HCT116 (cell line): ENCODE measurements at regions of chr11 and their contacts with region 1.

Region 1: DNA sequence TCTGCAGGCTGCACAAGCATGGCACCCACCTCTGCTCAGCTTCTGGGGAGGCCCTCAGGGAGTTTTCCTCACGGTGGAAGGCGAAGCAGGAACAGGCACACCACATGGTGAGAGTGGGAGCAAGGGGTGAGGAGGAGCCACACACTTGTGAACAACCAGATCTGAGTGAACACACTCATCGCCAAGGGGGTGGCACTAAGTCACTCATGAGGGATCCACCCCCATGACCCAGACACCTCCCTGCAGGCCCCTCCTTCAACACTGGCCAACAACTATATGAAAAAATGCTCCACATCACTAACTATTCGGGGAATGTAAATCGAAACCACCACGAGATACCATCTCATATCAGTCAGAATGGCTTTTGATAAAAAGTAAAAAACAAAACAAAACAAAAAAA is 722 bp upstream of the KRTAP5-2 start:
- DNase-seq: no peak
- ATAC-seq: no peak
- H3K4me3 ChIP-seq: no peak overlapping the region
- H3K27ac ChIP-seq: no peak overlapping the region
- H3K4me1 ChIP-seq: peaks cover 0 to 3% of the 10 kb centered on the region in 2 experiments; a peak in 1 of 4 replicates
- H3K27me3 ChIP-seq: peaks cover 19% of the 10 kb centered on the region; the same call in 1 of the 2 replicates
- CTCF ChIP-seq: no peak
- POLR2A ChIP-seq: no peak
- RAD21 ChIP-seq: no peak

Region 2: DNA sequence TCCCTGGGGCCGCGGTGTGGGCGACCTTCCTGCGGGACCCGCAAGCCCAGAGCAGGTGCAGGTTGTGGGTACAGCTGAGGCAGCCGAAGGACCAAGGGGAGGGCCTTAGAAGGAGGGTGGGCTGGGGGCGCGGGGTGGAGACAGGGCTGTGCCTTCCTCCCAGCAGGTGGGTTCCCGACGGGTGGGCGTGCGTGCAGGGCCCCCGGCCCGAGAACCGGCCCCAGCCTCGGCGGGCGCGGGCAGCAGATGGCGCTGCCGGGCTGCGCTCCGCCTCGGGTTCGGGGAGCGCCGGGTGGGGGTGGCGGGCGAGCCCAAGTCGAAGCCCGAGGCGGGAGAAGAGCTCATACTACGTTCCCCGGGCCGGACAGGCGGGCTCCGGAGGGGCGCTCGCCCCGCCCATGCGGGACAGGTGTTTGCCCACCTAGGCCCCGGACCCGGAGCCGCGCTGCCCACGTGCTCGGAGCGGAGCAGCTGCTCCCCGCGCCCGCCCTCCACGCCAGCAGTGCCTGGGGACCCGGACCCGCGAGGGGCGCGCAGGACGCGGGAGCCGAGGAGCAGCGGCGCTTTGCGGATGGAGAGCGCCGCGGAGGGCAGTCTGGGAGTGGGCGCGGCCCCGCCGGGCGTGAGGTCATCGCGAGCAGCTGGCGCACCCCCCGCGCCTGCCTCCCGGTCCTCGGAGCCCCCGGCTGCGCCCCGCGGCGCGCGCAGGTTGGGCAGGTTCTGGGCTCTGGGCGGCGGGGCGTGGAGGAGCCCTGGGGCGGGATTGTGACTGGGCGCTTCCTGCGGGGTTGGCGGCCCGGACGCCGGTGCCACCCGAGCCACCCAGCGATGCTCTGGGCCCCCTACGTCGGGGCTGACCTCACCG is 52.0 kb before region 1 on chr11:
- CTCF ChIA-PET with region 1: interaction called, 17 read pairs
- POLR2A ChIA-PET with region 1: interaction called, 4 read pairs
- RAD21 ChIA-PET with region 1: interaction called, 3 to 5 read pairs
- intact Hi-C with region 1: loop called (anchors 1 kb)
- DNase-seq: no peak
- ATAC-seq: peak; percentile 76
- H3K4me3 ChIP-seq: peak overlapping the region; percentile 50 to 62
- H3K27ac ChIP-seq: peak overlapping the region; percentile 88
- H3K4me1 ChIP-seq: peaks cover 17 to 37% of the 10 kb centered on the region in 2 experiments
- H3K27me3 ChIP-seq: no peaks in the 10 kb centered on the region
- CTCF ChIP-seq: peak in 2 of 3 experiments; percentile 69 to 80; a peak in 4 of 6 replicates
- POLR2A ChIP-seq: no peak
- RAD21 ChIP-seq: no peak

Region 3: GRCh38 chr11:1581976-1582375 is 16.8 kb before region 1 on chr11:
- CTCF ChIA-PET with region 1: interaction called, 10 read pairs
- POLR2A ChIA-PET with region 1: no interaction called
- RAD21 ChIA-PET with region 1: no interaction called
- intact Hi-C with region 1: no loop called
- DNase-seq: no peak
- ATAC-seq: no peak
- H3K4me3 ChIP-seq: no peak overlapping the region
- H3K27ac ChIP-seq: no peak overlapping the region
- H3K4me1 ChIP-seq: no peaks in the 10 kb centered on the region
- H3K27me3 ChIP-seq: no peaks in the 10 kb centered on the region
- CTCF ChIP-seq: no peak
- POLR2A ChIP-seq: no peak
- RAD21 ChIP-seq: no peak

Region 4: GRCh38 chr11:1889224-1890120 is 290.7 kb after region 1 on chr11:
- CTCF ChIA-PET with region 1: no interaction called
- POLR2A ChIA-PET with region 1: no interaction called
- RAD21 ChIA-PET with region 1: no interaction called
- intact Hi-C with region 1: no loop called
- DNase-seq: no peak
- ATAC-seq: no peak
- H3K4me3 ChIP-seq: no peak overlapping the region
- H3K27ac ChIP-seq: no peak overlapping the region
- H3K4me1 ChIP-seq: no peaks in the 10 kb centered on the region
- H3K27me3 ChIP-seq: peaks cover 8% of the 10 kb centered on the region; the same call in 1 of the 2 replicates
- CTCF ChIP-seq: no peak
- POLR2A ChIP-seq: no peak
- RAD21 ChIP-seq: no peak